H1 (cell line): ENCODE measurements at regions of chr18 and their contacts with region 1.

Region 1: GRCh38 chr18:49858309-49859020 is 45.1 kb upstream of the ACAA2 start:
- DNase-seq: peak; percentile 34 to 90
- H3K4me3 ChIP-seq: no peak overlapping the region
- H3K27ac ChIP-seq: no peak overlapping the region
- H3K4me1 ChIP-seq: peaks cover 0 to 9% (median 4%) of the 10 kb centered on the region in 4 experiments; a peak in 6 of 7 replicates
- H3K27me3 ChIP-seq: no peaks in the 10 kb centered on the region
- CTCF ChIP-seq: peak; percentile 66 to 84 (median 80)
- EP300 ChIP-seq: peak in 1 of 2 experiments; percentile 47; a peak in 1 of 3 replicates
- POLR2A ChIP-seq: no peak
- RAD21 ChIP-seq: peak; percentile 97 to 99

Region 2: DNA sequence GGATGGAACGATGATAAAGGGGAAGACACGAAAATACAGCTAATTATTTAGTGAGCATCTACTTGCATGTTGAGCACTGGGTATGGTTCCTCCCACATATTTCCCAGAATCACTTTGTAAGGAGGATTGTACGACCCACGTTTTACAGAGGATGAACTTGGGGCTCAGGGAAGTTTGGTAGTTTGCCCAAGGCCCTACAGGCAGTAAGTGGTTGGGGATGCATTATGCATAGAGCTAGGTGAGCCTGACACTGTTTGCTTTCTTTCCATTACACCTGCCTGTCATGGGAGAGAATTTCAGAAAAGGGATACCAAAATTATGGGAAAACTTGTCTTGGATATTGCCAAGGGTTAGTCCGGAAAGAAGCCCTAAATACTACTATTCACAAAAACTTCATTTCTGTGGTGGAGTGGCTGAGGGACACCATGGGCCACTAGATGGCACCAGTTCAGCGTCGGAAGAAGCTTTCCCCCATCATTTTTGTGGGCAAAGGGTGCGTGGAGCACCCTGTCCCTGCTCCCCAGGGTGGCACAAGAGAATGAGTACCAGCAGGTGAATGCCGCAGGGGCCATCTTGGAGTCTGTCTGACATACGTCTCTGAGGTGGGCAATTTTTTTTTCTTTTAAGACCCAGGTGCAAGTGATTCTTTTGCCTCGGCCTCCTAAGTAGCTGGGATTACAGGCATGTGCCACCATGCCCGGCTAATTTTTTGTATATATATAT is 347.9 kb before region 1 on chr18:
- CTCF ChIA-PET with region 1: interaction called, 82 read pairs
- POLR2A ChIA-PET with region 1: no interaction called
- DNase-seq: peak in 1 of 2 experiments; percentile 71
- H3K4me3 ChIP-seq: no peak overlapping the region
- H3K27ac ChIP-seq: no peak overlapping the region
- H3K4me1 ChIP-seq: peaks cover 0 to 2% (median 0%) of the 10 kb centered on the region in 4 experiments; a peak in 1 of 7 replicates
- H3K27me3 ChIP-seq: no peaks in the 10 kb centered on the region
- CTCF ChIP-seq: peak; percentile 79 to 91 (median 79)
- EP300 ChIP-seq: no peak
- POLR2A ChIP-seq: no peak
- RAD21 ChIP-seq: peak; percentile 95 to 97

Region 3: DNA sequence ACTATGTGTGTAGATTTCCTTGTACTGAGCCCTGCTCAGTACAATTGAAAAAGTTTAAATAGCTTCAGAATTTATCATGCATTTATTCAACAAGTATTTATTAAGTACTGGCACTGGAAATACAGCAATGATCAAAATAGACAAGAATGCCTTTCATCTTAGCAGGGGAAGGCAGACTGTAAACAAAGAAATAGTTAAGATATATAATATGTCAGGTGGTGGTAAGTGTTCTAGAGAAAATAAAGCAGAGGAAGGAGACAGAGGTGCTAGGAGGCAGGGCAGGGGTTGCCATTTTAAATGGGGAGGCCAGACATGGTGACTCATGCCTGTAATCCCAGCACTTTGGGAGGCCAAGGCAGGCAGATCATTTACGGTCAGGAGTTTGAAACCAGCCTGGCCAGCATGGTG is 310.2 kb before region 1 on chr18:
- CTCF ChIA-PET with region 1: no interaction called
- POLR2A ChIA-PET with region 1: no interaction called
- DNase-seq: no peak
- H3K4me3 ChIP-seq: no peak overlapping the region
- H3K27ac ChIP-seq: no peak overlapping the region
- H3K4me1 ChIP-seq: no peaks in the 10 kb centered on the region
- H3K27me3 ChIP-seq: no peaks in the 10 kb centered on the region
- CTCF ChIP-seq: no peak
- EP300 ChIP-seq: no peak
- POLR2A ChIP-seq: no peak
- RAD21 ChIP-seq: no peak

Region 4: DNA sequence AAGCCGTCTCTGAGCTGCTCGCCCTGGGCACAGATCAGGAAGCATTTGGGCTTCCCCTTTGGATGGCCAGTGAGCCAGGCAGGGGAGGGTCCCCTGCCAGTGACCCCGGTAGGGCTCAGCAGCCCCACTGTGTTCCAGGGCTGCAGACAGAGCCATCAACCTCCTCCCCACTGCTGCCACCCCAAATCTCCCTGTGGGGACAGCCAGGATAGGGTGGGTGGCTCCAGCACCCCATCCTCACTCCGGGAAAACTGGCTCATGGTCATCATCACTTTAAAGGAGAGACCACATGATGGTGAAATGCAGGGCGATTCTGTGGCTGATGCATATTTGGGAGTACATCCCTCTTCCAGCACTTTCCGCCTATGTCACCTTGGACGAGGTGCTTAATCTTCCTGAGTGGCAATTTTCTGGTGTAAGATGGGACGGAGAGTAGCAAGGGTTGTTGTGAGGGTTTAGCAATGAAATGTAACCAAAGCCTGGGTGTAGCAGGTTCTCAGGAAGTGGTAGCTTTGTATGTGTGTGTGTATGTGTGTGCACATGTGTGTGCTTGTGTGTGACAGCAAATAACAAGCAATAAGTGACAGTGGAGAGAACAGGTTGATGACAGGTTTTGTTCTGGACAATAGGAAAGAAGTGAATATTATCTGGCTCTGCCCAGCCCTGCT is 106.9 kb before region 1 on chr18:
- CTCF ChIA-PET with region 1: interaction called, 13 read pairs
- POLR2A ChIA-PET with region 1: no interaction called
- DNase-seq: peak in 1 of 2 experiments; percentile 35
- H3K4me3 ChIP-seq: no peak overlapping the region
- H3K27ac ChIP-seq: no peak overlapping the region
- H3K4me1 ChIP-seq: no peaks in the 10 kb centered on the region
- H3K27me3 ChIP-seq: no peaks in the 10 kb centered on the region
- CTCF ChIP-seq: no peak
- EP300 ChIP-seq: no peak
- POLR2A ChIP-seq: no peak
- RAD21 ChIP-seq: no peak

Region 5: DNA sequence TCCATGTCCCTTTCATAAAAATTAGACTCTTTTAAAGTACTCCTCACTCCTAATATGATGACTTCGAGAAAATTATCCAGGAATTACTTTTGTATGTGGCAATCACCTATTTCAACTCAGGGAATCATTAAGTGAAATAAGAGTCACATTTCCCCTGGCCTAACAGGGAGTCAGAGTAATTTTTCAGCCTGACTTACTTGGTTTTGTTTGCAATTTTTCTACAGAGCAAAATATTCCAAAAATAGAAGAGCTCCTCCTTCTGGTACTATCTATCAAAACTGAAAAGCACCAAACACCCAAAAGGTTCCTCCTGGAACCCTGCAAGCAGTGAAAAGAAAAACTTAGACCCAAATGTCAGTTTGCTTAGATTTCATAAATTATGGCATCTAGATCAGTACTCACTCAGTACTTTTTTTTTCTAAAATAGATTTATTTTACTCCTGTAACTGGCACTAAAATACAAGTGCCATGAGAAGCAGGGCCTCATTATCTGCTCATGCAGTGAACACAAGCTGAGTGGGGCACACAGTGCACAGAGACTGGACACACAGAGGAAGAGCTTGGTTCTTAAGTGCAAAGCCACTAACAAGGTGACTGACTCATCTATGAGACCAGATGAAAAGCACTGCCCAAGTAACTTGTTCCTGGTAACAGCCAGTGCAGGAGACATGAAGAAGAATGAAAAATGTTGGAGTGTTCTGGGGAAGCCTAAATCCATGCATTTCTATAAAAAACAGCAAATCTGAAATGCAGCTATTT is 73.9 kb before region 1 on chr18:
- CTCF ChIA-PET with region 1: interaction called, 24 read pairs
- POLR2A ChIA-PET with region 1: no interaction called
- DNase-seq: no peak
- H3K4me3 ChIP-seq: no peak overlapping the region
- H3K27ac ChIP-seq: no peak overlapping the region
- H3K4me1 ChIP-seq: no peaks in the 10 kb centered on the region
- H3K27me3 ChIP-seq: no peaks in the 10 kb centered on the region
- CTCF ChIP-seq: no peak
- EP300 ChIP-seq: no peak
- POLR2A ChIP-seq: no peak
- RAD21 ChIP-seq: no peak

Region 6: GRCh38 chr18:49819823-49820671 is 38.4 kb before region 1 on chr18:
- CTCF ChIA-PET with region 1: interaction called, 30 read pairs
- POLR2A ChIA-PET with region 1: interaction called, 3 read pairs
- DNase-seq: no peak
- H3K4me3 ChIP-seq: no peak overlapping the region
- H3K27ac ChIP-seq: no peak overlapping the region
- H3K4me1 ChIP-seq: no peaks in the 10 kb centered on the region
- H3K27me3 ChIP-seq: no peaks in the 10 kb centered on the region
- CTCF ChIP-seq: no peak
- EP300 ChIP-seq: no peak
- POLR2A ChIP-seq: no peak
- RAD21 ChIP-seq: no peak

Region 7: DNA sequence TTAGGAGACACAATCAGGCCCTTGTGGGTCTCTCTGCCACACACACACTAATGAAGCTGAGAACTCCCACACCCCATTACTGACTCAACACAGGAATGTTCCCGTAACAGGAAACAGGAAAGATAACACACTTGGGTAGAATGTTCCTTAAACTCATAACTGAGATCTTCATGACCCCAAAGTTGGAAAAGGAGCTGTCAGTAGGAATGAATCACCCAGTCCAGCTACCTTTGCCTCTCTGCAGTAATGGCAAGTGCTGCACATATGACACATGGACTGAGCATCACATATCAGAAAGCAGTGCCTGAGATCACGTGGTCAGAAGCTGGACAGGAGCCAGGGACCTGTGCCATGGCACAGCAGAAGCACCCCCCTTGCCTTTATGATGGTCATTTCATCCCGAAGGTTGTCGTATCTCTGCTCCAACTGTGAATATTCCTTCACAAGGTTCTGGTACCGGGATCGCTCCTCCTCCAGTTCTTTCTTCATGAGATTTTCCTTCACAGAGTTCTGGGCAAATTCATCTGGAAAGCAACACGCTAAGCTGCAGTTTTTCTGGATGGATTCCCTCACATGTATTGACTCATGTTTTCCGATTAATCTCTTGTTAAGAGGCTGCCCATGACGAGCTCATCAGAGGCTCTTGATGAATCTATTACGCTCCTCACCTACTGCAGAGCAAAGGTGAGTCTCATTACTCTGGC is 20.3 kb after region 1 on chr18:
- CTCF ChIA-PET with region 1: interaction called, 19 read pairs
- POLR2A ChIA-PET with region 1: no interaction called
- DNase-seq: no peak
- H3K4me3 ChIP-seq: no peak overlapping the region
- H3K27ac ChIP-seq: no peak overlapping the region
- H3K4me1 ChIP-seq: no peaks in the 10 kb centered on the region
- H3K27me3 ChIP-seq: no peaks in the 10 kb centered on the region
- CTCF ChIP-seq: no peak
- EP300 ChIP-seq: no peak
- POLR2A ChIP-seq: no peak
- RAD21 ChIP-seq: no peak

Region 8: DNA sequence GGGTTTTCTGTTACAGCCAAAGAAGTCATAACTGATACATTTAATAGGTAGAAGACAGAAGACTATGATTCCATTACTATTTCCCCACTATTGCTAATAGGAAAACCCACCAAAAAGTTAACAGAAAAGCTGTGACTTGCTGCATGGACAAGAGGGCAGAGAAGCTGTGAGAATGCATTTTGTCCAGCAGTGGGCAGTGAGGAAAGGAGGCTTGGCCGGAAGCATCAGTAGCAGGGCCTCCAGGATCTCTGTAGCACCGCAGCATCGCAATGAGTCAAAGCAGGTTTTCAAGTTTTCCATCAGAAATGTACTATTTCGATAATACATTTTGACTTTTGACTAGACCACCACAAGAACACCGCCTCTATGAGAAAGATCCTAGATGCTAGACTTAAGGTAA is 311.5 kb after region 1 on chr18:
- CTCF ChIA-PET with region 1: no interaction called
- POLR2A ChIA-PET with region 1: no interaction called
- DNase-seq: no peak
- H3K4me3 ChIP-seq: no peak overlapping the region
- H3K27ac ChIP-seq: no peak overlapping the region
- H3K4me1 ChIP-seq: no peaks in the 10 kb centered on the region
- H3K27me3 ChIP-seq: no peaks in the 10 kb centered on the region
- CTCF ChIP-seq: peak; percentile 14 to 28 (median 17); a peak in 2 of 4 replicates
- EP300 ChIP-seq: no peak
- POLR2A ChIP-seq: no peak
- RAD21 ChIP-seq: peak in 1 of 2 experiments; percentile 27; a peak in 2 of 4 replicates